ENCODE measurements at regions of chr12 and their contacts with region 1.

Region 1: DNA sequence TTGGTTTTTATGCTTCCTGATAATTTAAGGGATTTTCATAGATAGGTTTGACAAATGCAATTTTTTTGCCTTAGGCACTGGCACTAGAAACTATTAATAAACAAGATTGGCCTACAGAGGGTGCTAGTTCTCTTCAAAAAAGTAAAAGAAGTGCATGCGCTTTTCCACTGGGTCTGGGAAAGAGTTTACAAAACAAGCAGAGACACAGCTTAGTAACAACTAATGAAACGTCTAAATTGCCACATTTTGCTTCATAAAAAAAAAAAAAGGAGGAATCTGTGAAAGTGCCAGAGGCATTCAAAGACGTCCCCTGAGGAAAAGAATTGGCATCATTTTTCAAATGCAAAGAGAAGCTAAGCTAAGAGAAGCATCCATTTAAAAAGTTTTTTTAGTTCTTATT is 58.3 kb upstream of the EEA1 start:
- DNase-seq: peak; percentile 82
- H3K4me3 ChIP-seq: no peak overlapping the region
- H3K27ac ChIP-seq: no peak overlapping the region
- H3K4me1 ChIP-seq: peaks cover 4% of the 10 kb centered on the region
- H3K27me3 ChIP-seq: no peaks in the 10 kb centered on the region
- CTCF ChIP-seq: peak; percentile 28 to 30
- POLR2A ChIP-seq: no peak

Region 2: GRCh38 chr12:92561543-92561899 is 425.8 kb before region 1 on chr12:
- CTCF ChIA-PET with region 1: no interaction called
- POLR2A ChIA-PET with region 1: no interaction called
- dilution Hi-C with region 1: no loop called
- intact Hi-C with region 1: no loop called
- DNase-seq: peak; percentile 72
- H3K4me3 ChIP-seq: no peak overlapping the region
- H3K27ac ChIP-seq: no peak overlapping the region
- H3K4me1 ChIP-seq: no peaks in the 10 kb centered on the region
- H3K27me3 ChIP-seq: no peaks in the 10 kb centered on the region
- CTCF ChIP-seq: no peak
- POLR2A ChIP-seq: no peak

Region 3: DNA sequence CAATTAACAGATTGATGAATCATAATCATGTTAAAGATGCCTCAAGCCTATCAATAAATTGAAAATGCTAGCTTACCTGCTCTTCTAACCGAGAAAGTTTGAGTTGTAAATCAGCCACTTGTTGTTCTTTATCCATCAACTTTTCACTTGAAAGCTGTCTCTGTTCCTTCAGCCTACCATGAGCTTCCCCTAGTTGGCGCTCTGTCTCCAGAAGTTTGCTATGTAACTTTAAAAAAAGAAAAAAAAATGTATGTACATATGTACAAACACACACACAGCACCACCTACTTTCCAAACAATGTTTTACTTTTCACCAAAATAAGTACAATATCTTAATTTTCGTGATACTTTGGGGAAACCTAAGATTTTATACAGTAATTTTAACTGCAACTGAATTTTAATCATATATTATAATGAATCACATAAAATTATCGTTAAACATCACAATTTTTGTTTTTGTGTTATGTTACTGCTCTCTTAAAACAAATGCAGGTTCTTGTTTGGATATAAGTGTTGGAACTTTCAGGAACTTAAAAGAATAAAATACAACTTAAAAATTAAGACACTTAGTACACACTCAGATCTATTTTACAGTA is 159.4 kb before region 1 on chr12:
- CTCF ChIA-PET with region 1: interaction called, 13 read pairs
- POLR2A ChIA-PET with region 1: no interaction called
- dilution Hi-C with region 1: no loop called
- intact Hi-C with region 1: no loop called
- DNase-seq: peak; percentile 69
- H3K4me3 ChIP-seq: no peak overlapping the region
- H3K27ac ChIP-seq: no peak overlapping the region
- H3K4me1 ChIP-seq: no peaks in the 10 kb centered on the region
- H3K27me3 ChIP-seq: no peaks in the 10 kb centered on the region
- CTCF ChIP-seq: peak; percentile 61 to 67
- POLR2A ChIP-seq: no peak

Region 4: DNA sequence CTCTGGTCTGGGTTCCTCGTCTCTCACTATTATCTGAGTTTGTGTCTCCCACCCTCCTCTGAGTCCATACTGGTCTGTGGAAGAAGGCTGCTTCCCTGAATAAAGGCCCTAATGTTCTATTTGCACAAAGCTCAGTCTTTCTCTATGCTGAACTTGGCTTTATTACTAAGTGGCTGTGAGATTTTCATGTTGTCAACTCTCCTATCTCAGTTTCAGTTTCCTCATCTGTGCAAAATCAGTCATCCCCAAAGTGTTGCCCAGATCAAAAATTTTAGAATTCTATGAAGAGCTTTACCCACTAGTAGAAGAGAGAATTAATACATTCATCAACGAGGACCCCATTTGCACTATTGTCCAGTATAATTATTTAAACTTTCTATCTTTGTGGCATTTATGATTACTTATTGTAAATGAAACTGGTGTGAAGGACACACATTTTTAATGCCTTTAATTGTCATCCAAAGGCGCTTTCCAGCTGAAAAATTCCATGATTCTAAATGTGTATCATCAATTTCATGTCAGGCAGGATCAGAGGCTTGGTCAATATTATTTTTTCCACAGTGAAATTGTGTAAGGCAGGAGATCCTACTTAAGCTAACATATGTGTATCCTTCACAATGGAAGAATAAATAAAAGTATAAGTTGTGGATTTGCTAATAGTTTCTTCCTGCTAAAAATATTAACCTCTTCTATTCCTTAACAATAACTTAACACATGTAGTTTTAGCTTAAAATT is 20.8 kb after region 1 on chr12:
- CTCF ChIA-PET with region 1: interaction called, 31 read pairs
- POLR2A ChIA-PET with region 1: no interaction called
- dilution Hi-C with region 1: no loop called
- intact Hi-C with region 1: no loop called
- DNase-seq: peak; percentile 42
- H3K4me3 ChIP-seq: no peak overlapping the region
- H3K27ac ChIP-seq: no peak overlapping the region
- H3K4me1 ChIP-seq: peaks cover 20% of the 10 kb centered on the region
- H3K27me3 ChIP-seq: no peaks in the 10 kb centered on the region
- CTCF ChIP-seq: no peak
- POLR2A ChIP-seq: no peak

Region 5: GRCh38 chr12:93089805-93090569 is 102.6 kb after region 1 on chr12:
- CTCF ChIA-PET with region 1: interaction called, 4 read pairs
- POLR2A ChIA-PET with region 1: no interaction called
- dilution Hi-C with region 1: no loop called
- intact Hi-C with region 1: loop called (anchors 5 kb)
- DNase-seq: peak; percentile 92
- H3K4me3 ChIP-seq: no peak overlapping the region
- H3K27ac ChIP-seq: peak overlapping the region; percentile 83
- H3K4me1 ChIP-seq: peaks cover 41% of the 10 kb centered on the region
- H3K27me3 ChIP-seq: no peaks in the 10 kb centered on the region
- CTCF ChIP-seq: no peak
- POLR2A ChIP-seq: no peak

Region 6: GRCh38 chr12:93387780-93388179 is 400.4 kb after region 1 on chr12:
- CTCF ChIA-PET with region 1: interaction called, 87 read pairs
- POLR2A ChIA-PET with region 1: no interaction called
- dilution Hi-C with region 1: no loop called
- intact Hi-C with region 1: no loop called
- DNase-seq: peak; percentile 51
- H3K4me3 ChIP-seq: no peak overlapping the region
- H3K27ac ChIP-seq: no peak overlapping the region
- H3K4me1 ChIP-seq: peaks cover 17% of the 10 kb centered on the region
- H3K27me3 ChIP-seq: no peaks in the 10 kb centered on the region
- CTCF ChIP-seq: no peak
- POLR2A ChIP-seq: no peak

Region 7: DNA sequence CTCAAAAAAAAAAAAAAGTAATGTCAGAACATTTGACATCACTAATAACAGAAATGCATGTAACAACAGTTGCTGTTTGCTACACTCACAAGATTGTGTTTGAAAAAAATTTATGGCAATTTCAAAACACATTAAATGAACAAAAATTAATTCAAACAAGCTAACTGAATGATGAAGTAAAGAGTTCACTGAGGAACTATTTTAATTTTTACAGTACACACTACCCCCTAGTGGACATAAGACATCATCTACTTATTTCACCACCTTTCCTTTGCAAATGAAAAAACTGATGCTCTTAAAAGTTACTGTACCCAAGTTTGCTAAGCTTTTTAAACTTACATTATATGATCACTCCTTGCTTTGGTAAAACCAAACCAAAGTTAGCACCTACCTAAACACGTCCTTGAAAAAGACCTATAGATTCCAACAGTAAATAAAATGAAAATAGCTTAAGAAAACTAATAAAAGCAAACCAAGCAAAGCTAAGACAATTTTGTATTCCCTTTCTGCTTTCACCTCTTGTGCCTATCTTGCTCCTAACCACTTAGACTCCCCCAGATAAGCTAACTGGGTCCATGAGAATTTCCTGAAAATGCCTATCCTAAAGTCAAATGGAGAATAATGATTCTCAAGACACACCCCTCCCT is 432.1 kb after region 1 on chr12:
- CTCF ChIA-PET with region 1: interaction called, 109 read pairs
- POLR2A ChIA-PET with region 1: no interaction called
- dilution Hi-C with region 1: no loop called
- intact Hi-C with region 1: loop called (anchors 1 kb)
- DNase-seq: peak; percentile 76
- H3K4me3 ChIP-seq: no peak overlapping the region
- H3K27ac ChIP-seq: no peak overlapping the region
- H3K4me1 ChIP-seq: peaks cover 2% of the 10 kb centered on the region
- H3K27me3 ChIP-seq: no peaks in the 10 kb centered on the region
- CTCF ChIP-seq: peak; percentile 33 to 38
- POLR2A ChIP-seq: no peak

Measured in endothelial cell of umbilical vein (primary cell).